ENCODE measurements at regions of chr7 and their contacts with region 1.

Region 1: DNA sequence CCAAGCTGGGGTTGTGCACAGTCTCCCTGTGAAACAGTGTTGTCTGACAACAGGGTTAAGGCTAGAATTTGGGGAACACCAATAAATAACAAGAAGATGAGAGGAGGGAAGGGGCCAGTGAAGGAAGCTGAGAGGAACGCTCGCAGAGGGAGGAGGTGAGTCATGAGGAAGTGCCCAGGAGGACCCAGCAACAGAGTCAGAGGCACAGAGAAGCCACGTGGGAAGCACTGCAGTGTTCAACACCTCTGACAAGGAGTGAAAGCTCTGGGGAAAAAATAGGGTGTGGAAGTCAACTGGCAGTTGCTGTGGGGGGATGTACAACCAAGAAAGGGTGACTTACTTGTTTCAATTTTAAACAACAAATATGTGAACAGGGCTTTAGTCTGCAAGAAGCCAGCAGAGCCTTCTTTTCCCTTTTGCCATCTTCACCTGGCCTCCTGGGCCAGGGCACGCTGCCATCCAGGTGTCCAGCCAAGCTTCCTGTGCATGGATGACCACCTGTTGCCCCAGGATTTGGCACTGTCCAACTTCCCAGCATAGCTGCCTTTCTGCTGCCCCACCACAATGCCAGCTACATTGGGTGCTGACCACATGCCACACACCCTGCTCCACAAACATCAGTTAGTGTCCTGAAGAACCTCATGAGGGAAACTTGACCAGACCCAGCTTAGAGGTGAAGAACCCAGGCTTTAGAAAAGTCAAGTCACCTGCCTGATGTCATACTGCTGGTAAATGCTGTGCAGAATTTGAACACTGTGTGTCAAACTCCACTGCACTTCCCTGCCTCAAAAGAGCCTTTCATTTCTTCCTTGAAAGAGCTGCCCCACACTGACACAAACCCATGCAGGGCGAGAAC is 69.6 kb downstream of the ATXN7L1 start:
- DNase-seq: peak; percentile 43 to 73
- ATAC-seq: peak; percentile 86 to 87
- H3K4me3 ChIP-seq: no peak overlapping the region
- H3K27ac ChIP-seq: peak overlapping the region in 1 of 2 experiments; percentile 65; a peak in 3 of 6 replicates
- H3K4me1 ChIP-seq: peaks cover 29% of the 10 kb centered on the region
- CTCF ChIP-seq: no peak
- EP300 ChIP-seq: no peak
- POLR2A ChIP-seq: no peak
- RAD21 ChIP-seq: no peak

Region 2: DNA sequence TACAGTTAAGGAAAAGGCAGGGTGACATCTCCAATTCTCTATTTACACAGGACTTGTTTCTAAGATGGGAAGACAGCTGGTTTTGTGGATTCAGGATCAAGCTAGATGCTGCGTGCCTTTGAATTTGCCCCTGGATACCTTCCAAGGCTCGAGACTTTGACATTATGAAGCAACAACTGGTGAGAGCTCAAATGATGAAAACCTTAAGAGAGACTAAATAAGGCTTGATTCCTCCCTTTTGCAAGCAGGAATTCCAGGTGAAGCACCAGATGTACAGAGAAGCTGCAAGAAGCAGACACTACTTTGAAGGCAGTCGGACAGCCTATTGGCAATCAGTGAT is 11.5 kb before region 1 on chr7:
- CTCF ChIA-PET with region 1: interaction called, 11 read pairs
- POLR2A ChIA-PET with region 1: no interaction called
- DNase-seq: no peak
- ATAC-seq: no peak; a peak in 1 of 6 replicates
- H3K4me3 ChIP-seq: no peak overlapping the region
- H3K27ac ChIP-seq: no peak overlapping the region; a peak in 1 of 6 replicates
- H3K4me1 ChIP-seq: peaks cover 30% of the 10 kb centered on the region
- CTCF ChIP-seq: no peak
- EP300 ChIP-seq: no peak
- POLR2A ChIP-seq: no peak
- RAD21 ChIP-seq: no peak

Measured in A549 (cell line).